B cell (primary cell): ENCODE measurements at regions of chr1 and their contacts with region 1.

Region 1: DNA sequence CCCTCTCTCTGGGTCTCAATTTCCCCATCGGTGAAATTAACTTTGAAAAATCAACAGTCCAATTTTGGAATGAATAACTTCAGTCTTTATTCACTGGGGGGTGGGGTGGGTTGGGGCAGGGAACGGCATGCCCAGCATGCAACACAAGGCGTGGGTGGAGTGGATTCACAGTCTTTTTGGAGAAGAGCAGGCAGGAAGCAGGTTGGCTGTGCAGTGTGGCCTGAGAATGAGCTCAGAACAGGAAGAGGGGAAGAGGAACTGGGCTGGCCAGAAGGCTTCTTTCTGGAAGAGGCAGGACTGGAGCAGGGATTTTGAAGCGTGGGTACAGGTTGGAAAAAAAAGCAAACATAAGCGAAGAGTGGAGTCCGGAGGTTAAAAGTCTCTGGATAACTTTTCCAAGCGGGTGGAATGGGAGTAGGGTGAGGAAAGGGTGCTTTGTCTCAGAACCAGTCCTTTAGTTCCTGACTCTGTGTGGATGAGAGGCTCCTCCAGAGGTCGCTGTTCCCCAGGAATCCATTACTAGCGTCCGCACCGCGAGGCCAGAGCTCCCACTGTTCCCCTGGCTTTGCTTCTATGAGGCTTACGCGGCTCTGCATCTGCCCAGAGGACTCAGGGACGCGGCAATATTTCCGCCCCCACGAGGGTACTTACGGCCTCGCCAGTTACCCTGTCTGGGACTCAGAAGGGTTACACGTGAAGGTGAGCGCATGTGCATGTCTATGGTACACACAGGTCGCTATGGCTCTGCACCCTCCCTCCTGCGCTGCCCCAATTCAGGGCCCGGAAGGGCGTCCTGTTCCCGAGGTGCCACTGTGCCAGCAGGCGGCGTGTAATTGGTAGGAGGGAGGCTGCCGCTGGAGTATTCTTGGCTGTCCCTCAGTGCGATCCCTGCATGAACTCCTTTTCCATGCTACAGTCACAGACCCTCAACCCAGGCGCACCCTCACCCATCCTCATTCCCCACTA is 5.5 kb upstream of the FOXD2 start:
- DNase-seq: peak; percentile 51
- ATAC-seq: no peak
- H3K4me3 ChIP-seq: peak overlapping the region in 1 of 5 experiments; percentile 16
- H3K4me3 Mint-ChIP-seq: peak overlapping the region; percentile 68
- H3K27ac ChIP-seq: no peak overlapping the region
- H3K27ac Mint-ChIP-seq: no peak overlapping the region
- H3K4me1 ChIP-seq: peaks cover 44 to 49% of the 10 kb centered on the region in 2 donors
- H3K4me1 Mint-ChIP-seq: peaks cover 49% of the 10 kb centered on the region
- H3K27me3 ChIP-seq: peaks cover 4 to 76% (median 41%) of the 10 kb centered on the region in 4 experiments
- H3K27me3 Mint-ChIP-seq: peaks cover 55% of the 10 kb centered on the region
- CTCF ChIP-seq: peak; percentile 45

Region 2: GRCh38 chr1:47449822-47450552 is 17.6 kb after region 1 on chr1:
- CTCF ChIA-PET with region 1: interaction called, 10 read pairs
- POLR2A ChIA-PET with region 1: no interaction called
- intact Hi-C with region 1: loop called (anchors 2 kb)
- DNase-seq: no peak
- ATAC-seq: no peak
- H3K4me3 ChIP-seq: no peak overlapping the region
- H3K4me3 Mint-ChIP-seq: no peak overlapping the region
- H3K27ac ChIP-seq: no peak overlapping the region
- H3K27ac Mint-ChIP-seq: no peak overlapping the region
- H3K4me1 ChIP-seq: peaks cover 11 to 26% of the 10 kb centered on the region in 2 donors
- H3K4me1 Mint-ChIP-seq: peaks cover 3% of the 10 kb centered on the region
- H3K27me3 ChIP-seq: peaks cover 1 to 74% (median 52%) of the 10 kb centered on the region in 4 experiments
- H3K27me3 Mint-ChIP-seq: peaks cover 83% of the 10 kb centered on the region
- CTCF ChIP-seq: no peak

Region 3: DNA sequence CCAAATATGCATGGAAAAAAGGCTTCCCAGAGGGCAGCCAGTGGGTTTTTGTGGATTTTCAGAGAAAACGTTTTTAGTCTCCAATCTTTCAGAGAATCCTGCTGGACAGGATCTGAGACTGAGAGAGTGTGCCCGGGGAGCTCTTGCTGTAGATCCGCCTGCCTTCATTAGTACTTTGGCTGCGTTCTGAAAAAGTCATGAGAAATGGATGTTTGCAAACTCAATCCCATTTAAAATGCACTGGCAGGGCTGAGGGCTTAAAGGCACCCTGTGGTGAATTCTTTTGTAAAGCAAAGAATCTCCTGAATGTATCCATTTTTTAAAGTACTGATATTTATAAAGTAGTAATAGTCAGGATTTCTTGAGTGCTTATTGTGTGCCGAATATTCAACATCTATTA is 27.7 kb after region 1 on chr1:
- CTCF ChIA-PET with region 1: no interaction called
- POLR2A ChIA-PET with region 1: no interaction called
- intact Hi-C with region 1: no loop called
- DNase-seq: no peak
- ATAC-seq: no peak
- H3K4me3 ChIP-seq: no peak overlapping the region
- H3K4me3 Mint-ChIP-seq: no peak overlapping the region
- H3K27ac ChIP-seq: no peak overlapping the region
- H3K27ac Mint-ChIP-seq: no peak overlapping the region
- H3K4me1 ChIP-seq: no peaks in the 10 kb centered on the region
- H3K4me1 Mint-ChIP-seq: no peaks in the 10 kb centered on the region
- H3K27me3 ChIP-seq: peaks cover 0 to 37% (median 14%) of the 10 kb centered on the region in 4 experiments
- H3K27me3 Mint-ChIP-seq: peaks cover 74% of the 10 kb centered on the region
- CTCF ChIP-seq: no peak